ENCODE measurements at regions of chr6 and their contacts with region 1.

Region 1: GRCh38 chr6:336159-337019 is 44.1 kb downstream of the DUSP22 start:
- DNase-seq: no peak
- H3K4me3 Mint-ChIP-seq: peak overlapping the region; percentile 21
- H3K27ac Mint-ChIP-seq: peak overlapping the region; percentile 57
- H3K4me1 Mint-ChIP-seq: peaks cover 54% of the 10 kb centered on the region
- H3K27me3 Mint-ChIP-seq: no peaks in the 10 kb centered on the region

Region 2: GRCh38 chr6:319177-320131 is 16.9 kb before region 1 on chr6:
- intact Hi-C with region 1: loop called (anchors 2 kb)
- DNase-seq: no peak
- H3K4me3 Mint-ChIP-seq: no peak overlapping the region
- H3K27ac Mint-ChIP-seq: no peak overlapping the region
- H3K4me1 Mint-ChIP-seq: peaks cover 10% of the 10 kb centered on the region
- H3K27me3 Mint-ChIP-seq: peaks cover 2% of the 10 kb centered on the region

Region 3: DNA sequence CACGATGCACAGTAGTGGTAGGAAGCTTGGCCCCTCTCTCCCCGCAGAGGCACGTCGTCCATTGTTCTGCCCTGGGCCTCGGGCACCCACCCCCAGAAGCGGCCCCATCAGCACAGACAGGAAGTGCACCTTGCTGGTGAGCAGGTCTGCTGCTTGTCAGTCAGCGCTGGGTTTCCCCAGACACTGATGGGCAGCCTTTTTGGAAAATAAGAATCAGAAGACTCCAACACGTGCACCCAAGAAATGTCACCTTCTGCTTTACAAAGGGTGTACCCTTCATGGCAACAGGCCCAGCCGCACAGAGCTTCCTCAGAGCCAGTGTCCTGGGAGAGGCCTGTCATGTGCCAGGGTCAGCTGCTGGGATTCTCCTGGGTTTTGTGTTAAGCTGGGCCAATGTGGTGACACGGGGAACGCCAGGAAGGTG is 20.5 kb after region 1 on chr6:
- intact Hi-C with region 1: no loop called
- DNase-seq: no peak
- H3K4me3 Mint-ChIP-seq: no peak overlapping the region
- H3K27ac Mint-ChIP-seq: no peak overlapping the region
- H3K4me1 Mint-ChIP-seq: peaks cover 4% of the 10 kb centered on the region
- H3K27me3 Mint-ChIP-seq: no peaks in the 10 kb centered on the region